Aorta (tissue), 5 donors: ENCODE measurements at regions of chr11 and their contacts with region 1.

Region 1: GRCh38 chr11:120547811-120548681 is 36.5 kb downstream of the GRIK4 start:
- DNase-seq: peak; percentile 93 to 94
- ATAC-seq: peak; percentile 83
- H3K4me3 ChIP-seq: no peak overlapping the region
- H3K27ac ChIP-seq: peak overlapping the region in 1 of 2 donors; percentile 45
- H3K4me1 ChIP-seq: no peaks in the 10 kb centered on the region
- H3K27me3 ChIP-seq: no peaks in the 10 kb centered on the region

Region 2: GRCh38 chr11:119363851-119364590 is 1184.0 kb before region 1 on chr11:
- intact Hi-C with region 1: no loop called
- DNase-seq: peak in 1 of 2 donors; percentile 89
- ATAC-seq: peak; percentile 71
- H3K4me3 ChIP-seq: peak overlapping the region in 1 of 2 donors; percentile 28
- H3K27ac ChIP-seq: no peak overlapping the region
- H3K4me1 ChIP-seq: no peaks in the 10 kb centered on the region
- H3K27me3 ChIP-seq: no peaks in the 10 kb centered on the region

Region 3: DNA sequence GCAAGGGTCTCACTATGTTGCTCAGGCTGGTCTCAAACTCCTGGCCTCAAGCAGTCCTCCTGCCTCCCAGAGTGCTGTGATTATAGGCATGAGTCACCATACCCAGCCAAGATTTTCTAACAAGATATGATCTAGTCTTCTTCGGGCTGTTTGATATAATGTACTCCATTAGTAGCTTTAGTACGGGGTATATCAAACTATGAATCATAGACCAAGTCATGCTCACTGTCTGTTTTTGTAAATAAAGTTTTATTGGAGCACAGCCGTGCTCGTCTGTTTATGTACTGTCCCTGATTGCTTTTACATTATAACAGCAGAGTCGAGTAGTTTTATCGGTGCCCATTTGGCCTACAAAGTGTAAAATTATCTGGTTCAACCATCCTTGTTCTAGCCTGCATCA is 80.4 kb before region 1 on chr11:
- intact Hi-C with region 1: no loop called
- DNase-seq: no peak
- ATAC-seq: no peak
- H3K4me3 ChIP-seq: no peak overlapping the region
- H3K27ac ChIP-seq: no peak overlapping the region
- H3K4me1 ChIP-seq: no peaks in the 10 kb centered on the region
- H3K27me3 ChIP-seq: no peaks in the 10 kb centered on the region

Region 4: DNA sequence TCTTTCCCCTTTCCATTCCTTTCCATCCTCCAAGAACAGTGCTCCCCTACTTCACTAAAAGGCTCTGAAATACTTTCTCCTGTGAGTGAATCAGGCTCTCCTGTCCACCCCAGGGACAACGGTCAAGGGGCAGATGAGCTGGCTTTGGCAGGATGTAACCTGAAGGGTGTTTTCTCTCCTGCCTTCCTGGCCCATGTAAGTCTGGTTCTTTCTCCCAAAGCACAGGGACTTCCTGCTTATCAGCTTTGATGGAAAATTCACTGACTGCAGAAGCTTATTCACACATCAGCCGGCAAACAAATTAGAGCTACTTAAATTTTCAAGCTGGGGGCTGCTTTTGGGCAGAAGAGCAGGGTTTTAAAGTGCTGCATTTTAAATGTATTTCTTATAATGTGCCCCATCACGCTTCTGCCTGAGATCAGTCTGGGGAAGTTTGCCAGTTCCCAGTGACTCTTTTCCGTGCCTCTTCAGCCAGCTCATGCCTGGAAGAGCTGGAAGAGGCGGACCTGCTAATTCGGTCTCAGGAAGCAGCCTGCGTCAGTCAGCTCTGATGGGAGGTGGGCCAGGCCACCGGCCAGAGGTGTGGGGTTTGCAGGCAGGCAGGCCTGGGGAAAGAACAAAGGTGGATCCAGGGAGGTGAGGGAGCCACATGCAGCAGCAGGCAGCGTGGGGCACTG is 335.5 kb after region 1 on chr11:
- intact Hi-C with region 1: loop called in 1 of 2 experiments (anchors 5 kb)
- DNase-seq: peak; percentile 75 to 87
- ATAC-seq: peak; percentile 62
- H3K4me3 ChIP-seq: no peak overlapping the region
- H3K27ac ChIP-seq: no peak overlapping the region
- H3K4me1 ChIP-seq: peaks cover 2 to 7% of the 10 kb centered on the region in 2 donors
- H3K27me3 ChIP-seq: no peaks in the 10 kb centered on the region